CD8-positive, alpha-beta T cell (primary cell): ENCODE measurements at regions of chr17 and their contacts with region 1.

Region 1: GRCh38 chr17:59155439-59156182 is at the start of gene PRR11:
- DNase-seq: peak; percentile 82 to 99 (median 90)
- ATAC-seq: peak; percentile 85
- H3K4me3 ChIP-seq: peak within 1 kb of the TSS; percentile 95 to 97
- H3K4me3 Mint-ChIP-seq: no peak within 1 kb of the TSS
- H3K27ac ChIP-seq: peak within 1 kb of the TSS; percentile 62 to 74
- H3K27ac Mint-ChIP-seq: no peak within 1 kb of the TSS
- H3K4me1 ChIP-seq: peaks cover 15% of the 10 kb centered on the region
- H3K4me1 Mint-ChIP-seq: peaks cover 28% of the 10 kb centered on the region
- H3K27me3 ChIP-seq: no peaks in the 10 kb centered on the region
- H3K27me3 Mint-ChIP-seq: no peaks in the 10 kb centered on the region
- CTCF ChIP-seq: no peak
- total RNA-seq, gene PRR11: 0.30 to 0.69 TPM

Region 2: DNA sequence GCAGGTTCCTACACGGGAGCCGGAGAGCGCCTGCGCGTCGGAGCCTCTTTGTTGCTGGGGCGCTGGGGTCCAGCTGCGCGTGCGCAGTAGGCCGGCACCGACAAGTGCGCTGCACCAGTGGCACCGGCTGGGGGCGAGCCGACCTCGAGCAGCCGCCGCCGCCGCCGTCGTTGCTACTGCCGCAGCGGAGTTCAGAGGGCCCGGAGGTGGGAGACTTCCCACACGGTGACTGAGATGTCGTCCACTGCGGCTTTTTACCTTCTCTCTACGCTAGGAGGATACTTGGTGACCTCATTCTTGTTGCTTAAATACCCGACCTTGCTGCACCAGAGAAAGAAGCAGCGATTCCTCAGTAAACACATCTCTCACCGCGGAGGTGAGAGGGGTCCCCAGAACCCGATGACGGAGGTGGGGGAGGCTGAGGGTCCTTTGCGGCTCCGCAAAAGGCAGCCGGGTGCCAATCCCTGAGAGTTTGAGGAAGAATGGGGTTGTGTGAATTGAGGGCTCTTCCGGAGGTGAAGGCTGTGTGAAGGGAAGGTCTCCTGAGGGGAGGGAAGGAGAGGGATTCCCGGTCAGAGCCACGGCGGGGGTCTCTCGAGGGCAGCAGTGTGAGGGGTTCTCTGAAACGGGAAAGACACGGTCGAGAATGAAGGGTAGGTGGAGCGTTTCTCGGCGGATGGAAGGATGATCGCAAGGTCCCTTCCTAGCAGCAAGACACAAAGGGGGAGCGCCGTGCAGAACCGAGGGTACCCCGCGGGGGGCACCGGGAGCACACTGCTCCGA is 65.0 kb after region 1 on chr17 and contains the start of gene GDPD1:
- CTCF ChIA-PET with region 1: no interaction called
- POLR2A ChIA-PET with region 1: interaction called, 8 read pairs
- intact Hi-C with region 1: loop called (anchors 1 kb)
- DNase-seq: peak; percentile 94 to 99 (median 97)
- ATAC-seq: peak; percentile 96
- H3K4me3 ChIP-seq: peak within 1 kb of the TSS; percentile 97 to 100
- H3K4me3 Mint-ChIP-seq: peak within 1 kb of the TSS; percentile 98
- H3K27ac ChIP-seq: peak within 1 kb of the TSS; percentile 91 to 92
- H3K27ac Mint-ChIP-seq: peak within 1 kb of the TSS; percentile 99
- H3K4me1 ChIP-seq: peaks cover 4% of the 10 kb centered on the region
- H3K4me1 Mint-ChIP-seq: peaks cover 13% of the 10 kb centered on the region
- H3K27me3 ChIP-seq: no peaks in the 10 kb centered on the region
- H3K27me3 Mint-ChIP-seq: no peaks in the 10 kb centered on the region
- CTCF ChIP-seq: peak; percentile 71
- total RNA-seq, gene GDPD1: 1.1 to 1.8 TPM